Motor neuron (in vitro differentiated cells): ENCODE measurements at regions of chr2 and their contacts with region 1.

Region 1: GRCh38 chr2:69724540-69725159 is 17.3 kb upstream of the ANXA4 start:
- ATAC-seq: peak; percentile 96 to 99 (median 98)
- H3K4me3 ChIP-seq: peak overlapping the region; percentile 11 to 22 (median 15)
- H3K27ac ChIP-seq: no peak overlapping the region
- H3K4me1 ChIP-seq: no peaks in the 10 kb centered on the region

Region 2: GRCh38 chr2:69509007-69509749 is 215.5 kb before region 1 on chr2:
- in situ Hi-C with region 1: no loop called
- ATAC-seq: peak in 1 of 8 experiments; percentile 25
- H3K4me3 ChIP-seq: no peak overlapping the region
- H3K27ac ChIP-seq: no peak overlapping the region
- H3K4me1 ChIP-seq: peaks cover 0 to 5% of the 10 kb centered on the region in 2 donors

Region 3: DNA sequence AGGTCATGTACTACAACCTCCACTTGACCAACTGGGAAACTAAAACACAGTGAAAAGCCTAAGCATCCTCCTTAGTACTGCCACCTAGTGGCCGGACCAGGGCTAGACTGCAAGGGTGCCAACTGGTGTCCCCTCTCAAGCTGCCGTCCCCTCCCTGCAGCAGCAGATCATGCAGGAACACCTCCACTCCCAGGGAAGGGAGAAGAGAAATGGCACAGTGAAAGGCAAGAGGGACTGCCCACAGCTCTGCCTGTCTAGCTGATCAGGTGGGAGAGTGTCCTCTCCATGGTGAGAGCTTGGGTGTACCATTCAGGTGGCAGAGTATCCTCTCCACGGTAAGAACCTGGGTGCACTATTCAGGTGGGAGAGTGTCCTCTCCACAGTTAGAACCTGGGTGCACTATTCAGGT is 159.2 kb before region 1 on chr2:
- in situ Hi-C with region 1: loop called in 2 of 9 experiments (anchors 25 kb)
- ATAC-seq: peak in 4 of 8 experiments; percentile 37 to 77 (median 64)
- H3K4me3 ChIP-seq: no peak overlapping the region
- H3K27ac ChIP-seq: no peak overlapping the region
- H3K4me1 ChIP-seq: no peaks in the 10 kb centered on the region

Region 4: GRCh38 chr2:69816923-69817542 is 92.4 kb after region 1 on chr2:
- in situ Hi-C with region 1: loop called in 5 of 9 experiments (anchors 5 to 25 kb)
- ATAC-seq: peak in 7 of 8 experiments; percentile 35 to 69 (median 54)
- H3K4me3 ChIP-seq: no peak overlapping the region
- H3K27ac ChIP-seq: no peak overlapping the region
- H3K4me1 ChIP-seq: no peaks in the 10 kb centered on the region

Region 5: GRCh38 chr2:69829256-69830046 is 104.8 kb after region 1 on chr2 and contains the start of gene GMCL1:
- in situ Hi-C with region 1: loop called in 2 of 9 experiments (anchors 5 to 25 kb)
- ATAC-seq: peak; percentile 85 to 95 (median 94)
- H3K4me3 ChIP-seq: peak within 1 kb of the TSS; percentile 57 to 91 (median 72)
- H3K27ac ChIP-seq: peak within 1 kb of the TSS; percentile 78 to 90
- H3K4me1 ChIP-seq: peaks cover 11 to 18% of the 10 kb centered on the region in 2 donors
- total RNA-seq, gene GMCL1: 6.4 to 19.5 (median 8.5) TPM

Region 6: DNA sequence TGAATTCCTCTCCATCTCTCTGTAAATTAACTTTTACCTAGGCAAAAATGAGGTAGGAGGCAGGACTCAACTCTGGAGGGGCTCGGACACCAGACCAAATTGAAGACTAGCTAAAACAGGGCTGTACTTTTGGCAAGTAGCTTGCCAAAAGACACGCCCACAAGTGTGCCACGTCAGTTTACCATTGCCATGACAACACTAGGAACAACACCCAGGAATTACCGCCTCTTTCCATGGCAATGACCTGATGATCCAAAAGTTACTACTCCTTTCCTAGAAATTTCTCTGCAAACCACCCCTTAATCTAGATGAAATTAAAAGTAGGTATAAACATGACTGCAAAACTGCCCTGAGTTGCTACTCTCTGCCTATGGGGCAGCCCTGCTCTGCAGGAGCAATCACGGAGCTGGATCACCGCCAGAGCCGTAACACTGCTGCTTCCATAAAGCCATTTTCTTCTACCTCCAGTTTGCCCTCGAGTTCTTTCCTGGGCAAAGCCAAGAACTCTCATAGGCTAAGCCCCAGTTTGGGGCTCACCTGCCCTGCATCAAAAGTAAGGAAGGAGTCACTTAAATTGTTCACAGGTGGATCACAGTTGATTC is 643.2 kb after region 1 on chr2:
- in situ Hi-C with region 1: no loop called
- ATAC-seq: peak in 3 of 8 experiments; percentile 56 to 83 (median 56)
- H3K4me3 ChIP-seq: no peak overlapping the region
- H3K27ac ChIP-seq: no peak overlapping the region
- H3K4me1 ChIP-seq: no peaks in the 10 kb centered on the region

Region 7: GRCh38 chr2:70523996-70524965 is 799.6 kb after region 1 on chr2:
- in situ Hi-C with region 1: no loop called
- ATAC-seq: peak in 2 of 8 experiments; percentile 43 to 61
- H3K4me3 ChIP-seq: no peak overlapping the region
- H3K27ac ChIP-seq: no peak overlapping the region
- H3K4me1 ChIP-seq: no peaks in the 10 kb centered on the region